Naive thymus-derived CD4-positive, alpha-beta T cell (primary cell): ENCODE measurements at regions of chr4 and their contacts with region 1.

Region 1: DNA sequence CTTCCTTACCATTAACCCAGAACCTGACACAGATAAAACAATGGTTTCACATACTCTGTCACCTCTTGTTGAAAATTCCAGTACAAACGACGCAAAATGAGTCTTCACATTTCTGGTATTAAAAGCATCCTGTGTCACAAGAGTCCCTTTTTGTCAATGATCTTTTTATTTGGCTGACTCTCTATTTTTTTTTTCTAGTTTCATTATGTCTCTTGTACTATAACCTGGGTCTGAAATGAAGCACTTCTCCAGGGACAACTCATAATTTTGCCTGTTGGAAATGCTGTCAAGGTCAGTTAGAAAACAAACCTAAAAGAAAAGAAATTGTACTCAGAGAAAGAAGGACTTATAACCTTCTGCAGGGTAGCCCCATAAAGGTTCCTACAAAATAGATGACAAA is 93.1 kb downstream of the NR3C2 start:
- DNase-seq: no peak
- ATAC-seq: no peak
- H3K4me3 ChIP-seq: no peak overlapping the region
- H3K4me3 Mint-ChIP-seq: peak overlapping the region in 2 of 10 donors; percentile 1 to 4
- H3K27ac ChIP-seq: no peak overlapping the region
- H3K27ac Mint-ChIP-seq: peak overlapping the region in 1 of 9 donors; percentile 31
- H3K4me1 ChIP-seq: no peaks in the 10 kb centered on the region
- H3K4me1 Mint-ChIP-seq: peaks cover 0 to 79% (median 65%) of the 10 kb centered on the region in 7 donors
- H3K27me3 ChIP-seq: no peaks in the 10 kb centered on the region
- H3K27me3 Mint-ChIP-seq: no peaks in the 10 kb centered on the region

Region 2: DNA sequence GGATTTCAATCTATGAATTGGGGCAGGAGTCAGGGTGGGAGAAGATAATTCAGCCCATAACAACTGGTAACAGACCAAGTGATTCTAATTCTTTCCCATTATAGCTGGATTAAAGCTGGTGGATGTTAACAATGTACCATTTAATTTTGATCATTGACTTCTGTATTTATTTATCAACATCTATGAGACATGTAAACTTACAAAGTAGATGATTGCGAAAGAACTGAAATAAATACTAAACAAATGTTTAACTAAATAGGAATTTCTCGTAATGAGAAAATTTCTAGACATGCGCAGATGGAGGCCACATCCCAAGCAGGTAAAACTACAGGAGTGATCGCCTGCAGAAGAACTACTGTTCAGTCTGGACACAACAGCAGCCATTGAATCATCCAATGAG is 14.0 kb before region 1 on chr4:
- CTCF ChIA-PET with region 1: no interaction called
- POLR2A ChIA-PET with region 1: no interaction called
- intact Hi-C with region 1: loop called in 1 of 2 experiments (anchors 2 kb)
- DNase-seq: no peak
- ATAC-seq: no peak
- H3K4me3 ChIP-seq: no peak overlapping the region
- H3K4me3 Mint-ChIP-seq: no peak overlapping the region
- H3K27ac ChIP-seq: no peak overlapping the region
- H3K27ac Mint-ChIP-seq: no peak overlapping the region
- H3K4me1 ChIP-seq: no peaks in the 10 kb centered on the region
- H3K4me1 Mint-ChIP-seq: peaks cover 0 to 45% (median 31%) of the 10 kb centered on the region in 7 donors
- H3K27me3 ChIP-seq: no peaks in the 10 kb centered on the region
- H3K27me3 Mint-ChIP-seq: no peaks in the 10 kb centered on the region

Region 3: GRCh38 chr4:148810461-148810860 is 461.3 kb after region 1 on chr4:
- CTCF ChIA-PET with region 1: no interaction called
- POLR2A ChIA-PET with region 1: no interaction called
- intact Hi-C with region 1: no loop called
- DNase-seq: no peak
- ATAC-seq: no peak
- H3K4me3 ChIP-seq: no peak overlapping the region
- H3K4me3 Mint-ChIP-seq: no peak overlapping the region
- H3K27ac ChIP-seq: no peak overlapping the region
- H3K27ac Mint-ChIP-seq: no peak overlapping the region
- H3K4me1 ChIP-seq: no peaks in the 10 kb centered on the region
- H3K4me1 Mint-ChIP-seq: no peaks in the 10 kb centered on the region
- H3K27me3 ChIP-seq: no peaks in the 10 kb centered on the region
- H3K27me3 Mint-ChIP-seq: peaks cover 0 to 17% (median 7%) of the 10 kb centered on the region in 5 donors